ENCODE measurements at regions of chr4 and their contacts with region 1.

Region 1: DNA sequence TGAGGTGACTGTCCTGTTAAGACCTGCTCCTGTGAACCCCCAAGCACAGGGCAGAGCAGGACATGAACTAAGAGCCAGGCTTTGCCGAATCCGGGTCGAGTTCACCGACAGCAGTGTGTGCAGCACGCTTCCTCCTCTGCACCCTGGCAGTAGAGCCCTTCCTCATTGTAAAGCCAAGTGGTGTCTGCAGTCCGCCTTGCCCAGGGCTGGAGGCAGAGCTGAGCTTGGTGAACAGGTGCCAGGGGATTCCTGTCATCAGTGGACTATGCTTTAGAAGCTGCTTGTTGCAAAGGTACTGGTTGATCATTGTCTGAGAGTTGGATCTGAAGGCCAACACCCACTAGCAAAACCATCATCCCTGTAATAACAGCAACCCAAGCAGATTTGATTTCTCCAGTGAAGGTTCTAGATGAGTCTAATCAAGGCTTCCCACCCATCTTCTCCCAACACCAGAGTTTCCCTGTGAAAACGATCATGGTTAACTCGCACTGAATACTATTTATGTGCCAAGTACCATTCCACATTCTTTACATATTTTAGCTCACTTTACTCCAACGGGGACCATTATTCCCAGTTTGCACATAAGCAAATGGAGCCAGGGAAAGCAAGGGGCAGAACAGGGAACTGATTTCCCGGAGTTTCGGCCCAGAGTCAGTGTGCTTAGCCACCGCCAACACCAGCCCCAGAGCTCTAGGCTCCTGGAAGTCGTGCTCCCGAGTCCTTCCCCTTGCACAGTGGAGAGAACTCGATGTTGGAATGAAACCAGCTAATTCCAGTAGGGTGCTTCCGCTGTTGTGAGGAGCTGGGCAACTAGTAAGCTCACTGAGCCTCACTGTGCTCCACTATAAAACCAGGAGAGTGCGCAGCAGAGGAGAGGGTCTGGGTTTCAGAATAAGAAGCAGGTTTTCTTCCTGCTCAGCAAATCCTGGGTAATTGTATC is 1.4 kb upstream of the SLC34A2 start:
- DNase-seq: no peak
- H3K4me3 ChIP-seq: no peak overlapping the region
- H3K27ac ChIP-seq: no peak overlapping the region
- H3K4me1 ChIP-seq: no peaks in the 10 kb centered on the region
- H3K27me3 ChIP-seq: peaks cover 23% of the 10 kb centered on the region
- CTCF ChIP-seq: no peak

Region 2: DNA sequence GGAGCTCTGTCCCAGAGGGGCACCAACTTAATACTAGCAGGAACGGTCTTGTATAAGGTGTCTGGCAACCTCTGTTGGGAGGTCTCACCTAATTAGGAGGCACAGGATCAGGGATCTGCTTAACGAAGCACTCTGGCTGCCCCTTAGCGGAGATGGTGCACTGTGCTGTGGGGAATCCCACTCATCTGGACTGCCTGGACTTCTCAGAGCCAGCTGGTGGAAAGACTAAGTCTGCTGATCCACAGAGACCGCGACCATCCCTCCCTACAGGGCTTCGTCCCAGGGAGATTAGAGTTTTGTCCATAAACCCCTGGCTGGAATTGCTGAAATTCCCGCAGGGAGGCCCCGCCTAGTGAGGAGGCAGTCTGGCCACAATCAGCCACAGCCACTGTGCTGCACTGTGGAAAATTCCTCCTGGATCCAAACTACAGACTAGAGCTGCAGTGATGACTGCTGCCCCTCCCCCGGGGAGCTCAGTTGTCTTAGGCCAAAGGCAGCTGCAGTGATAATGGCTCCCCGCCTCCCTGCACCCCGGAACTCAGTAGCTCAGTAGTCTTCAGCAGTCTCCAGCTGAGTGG is 363.7 kb before region 1 on chr4:
- CTCF ChIA-PET with region 1: no interaction called
- dilution Hi-C with region 1: no loop called
- in situ Hi-C with region 1: no loop called
- intact Hi-C with region 1: no loop called
- DNase-seq: no peak
- H3K4me3 ChIP-seq: no peak overlapping the region
- H3K27ac ChIP-seq: no peak overlapping the region
- H3K4me1 ChIP-seq: no peaks in the 10 kb centered on the region
- H3K27me3 ChIP-seq: no peaks in the 10 kb centered on the region
- CTCF ChIP-seq: no peak

Region 3: DNA sequence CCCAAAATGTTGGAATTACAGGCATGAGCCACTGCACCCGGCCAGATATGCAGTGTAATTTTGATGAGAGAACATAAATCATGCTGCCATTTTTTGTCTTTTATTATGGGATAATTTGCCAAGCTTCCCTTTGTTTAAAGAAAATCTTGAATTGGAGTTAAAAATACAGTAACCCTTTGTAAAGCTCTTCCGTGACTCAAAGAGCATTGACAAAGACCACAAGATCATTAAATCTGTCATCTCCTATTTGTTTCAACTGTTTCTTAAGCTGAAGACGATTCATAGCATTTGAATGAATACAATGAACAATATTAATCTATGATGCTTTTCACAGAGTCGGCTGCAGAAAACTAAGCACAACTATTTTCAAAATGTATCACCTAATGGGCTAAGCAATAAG is 144.7 kb before region 1 on chr4:
- CTCF ChIA-PET with region 1: no interaction called
- dilution Hi-C with region 1: no loop called
- in situ Hi-C with region 1: no loop called
- intact Hi-C with region 1: no loop called
- DNase-seq: no peak
- H3K4me3 ChIP-seq: no peak overlapping the region
- H3K27ac ChIP-seq: no peak overlapping the region
- H3K4me1 ChIP-seq: no peaks in the 10 kb centered on the region
- H3K27me3 ChIP-seq: no peaks in the 10 kb centered on the region
- CTCF ChIP-seq: no peak

Region 4: GRCh38 chr4:25578432-25578831 is 75.9 kb before region 1 on chr4:
- CTCF ChIA-PET with region 1: no interaction called
- dilution Hi-C with region 1: loop called (anchors 10 kb)
- in situ Hi-C with region 1: no loop called
- intact Hi-C with region 1: no loop called
- DNase-seq: no peak
- H3K4me3 ChIP-seq: no peak overlapping the region
- H3K27ac ChIP-seq: no peak overlapping the region
- H3K4me1 ChIP-seq: no peaks in the 10 kb centered on the region
- H3K27me3 ChIP-seq: no peaks in the 10 kb centered on the region
- CTCF ChIP-seq: no peak

Region 5: DNA sequence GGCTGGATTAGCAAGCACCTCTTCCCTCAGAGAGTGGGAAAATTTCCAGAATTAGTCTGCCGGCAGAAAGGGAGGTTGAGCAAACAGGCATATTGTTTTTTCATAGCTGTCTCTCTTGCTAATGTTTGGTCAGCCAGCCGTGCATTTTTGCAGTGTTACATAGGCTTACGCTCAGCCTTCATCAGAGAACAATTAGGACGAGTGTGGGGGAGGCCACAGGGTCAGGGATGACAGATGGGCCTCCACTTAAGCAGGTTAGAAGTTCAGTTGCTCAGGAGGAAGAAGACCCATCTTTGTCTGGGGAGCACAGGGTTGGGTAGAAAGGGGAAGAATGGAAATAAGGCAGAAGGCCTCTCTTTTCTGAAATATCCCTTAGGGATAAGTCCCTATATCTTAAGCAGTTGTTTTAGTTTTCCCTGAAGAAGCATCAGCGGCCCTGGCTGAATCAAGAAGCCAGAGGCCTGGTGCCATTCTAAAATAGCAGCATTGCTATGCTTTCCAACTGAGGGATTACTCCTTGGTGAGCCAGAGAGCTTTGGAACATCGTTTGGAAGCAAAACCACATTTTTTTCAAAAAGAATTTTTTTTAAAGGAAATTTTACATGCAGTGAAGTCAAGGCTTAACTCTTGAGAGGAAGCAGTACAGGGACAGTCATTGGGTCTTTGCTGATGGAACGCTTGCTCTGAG is 378.5 kb after region 1 on chr4:
- CTCF ChIA-PET with region 1: no interaction called
- dilution Hi-C with region 1: no loop called
- in situ Hi-C with region 1: no loop called
- intact Hi-C with region 1: no loop called
- DNase-seq: no peak
- H3K4me3 ChIP-seq: no peak overlapping the region
- H3K27ac ChIP-seq: no peak overlapping the region
- H3K4me1 ChIP-seq: no peaks in the 10 kb centered on the region
- H3K27me3 ChIP-seq: peaks cover 2% of the 10 kb centered on the region
- CTCF ChIP-seq: no peak